ENCODE measurements at regions of chr2 and their contacts with region 1.

Region 1: GRCh38 chr2:60674524-60675165 is 81.4 kb upstream of the PAPOLG start:
- DNase-seq: peak; percentile 65
- ATAC-seq: peak; percentile 100
- H3K4me3 ChIP-seq: no peak overlapping the region
- H3K27ac ChIP-seq: no peak overlapping the region
- H3K4me1 ChIP-seq: no peaks in the 10 kb centered on the region; a peak in 1 of 4 replicates
- H3K27me3 ChIP-seq: no peaks in the 10 kb centered on the region
- CTCF ChIP-seq: peak; percentile 71 to 96 (median 94)
- POLR2A ChIP-seq: no peak
- RAD21 ChIP-seq: peak; percentile 77

Region 2: DNA sequence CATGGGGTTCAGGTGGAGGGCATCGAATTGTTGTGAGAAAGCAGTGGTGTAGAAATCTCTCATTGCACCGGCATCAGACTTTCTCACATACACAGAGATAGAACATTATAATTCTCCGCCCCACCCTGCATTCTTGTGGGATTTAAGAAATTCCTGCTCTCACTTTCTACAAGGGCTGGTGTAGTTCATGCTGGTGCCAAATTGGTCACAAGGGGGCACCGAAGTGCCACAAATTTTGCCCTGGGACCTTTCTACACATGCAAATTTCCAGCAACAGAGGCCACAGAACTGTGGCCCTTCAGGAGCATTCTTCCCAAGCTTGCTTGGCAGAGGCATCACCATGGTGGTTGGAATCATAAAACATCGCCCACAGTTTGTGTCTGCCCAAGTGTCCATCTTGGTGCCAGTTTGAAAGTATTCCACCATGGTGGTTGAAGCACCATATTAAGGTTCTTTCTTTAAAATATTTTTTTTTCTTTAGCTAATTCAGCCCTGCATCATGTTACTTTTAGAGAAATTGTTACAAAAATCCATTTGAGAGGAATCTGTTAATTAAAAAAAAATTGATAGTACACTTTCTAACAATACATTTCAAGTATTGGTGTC is 1912.4 kb before region 1 on chr2:
- CTCF ChIA-PET with region 1: no interaction called
- POLR2A ChIA-PET with region 1: no interaction called
- RAD21 ChIA-PET with region 1: no interaction called
- intact Hi-C with region 1: loop called (anchors 10 kb)
- DNase-seq: peak; percentile 41
- ATAC-seq: peak; percentile 97
- H3K4me3 ChIP-seq: no peak overlapping the region
- H3K27ac ChIP-seq: no peak overlapping the region
- H3K4me1 ChIP-seq: no peaks in the 10 kb centered on the region
- H3K27me3 ChIP-seq: peaks cover 32% of the 10 kb centered on the region
- CTCF ChIP-seq: peak; percentile 44 to 78 (median 74); a peak in 5 of 6 replicates
- POLR2A ChIP-seq: no peak
- RAD21 ChIP-seq: peak; percentile 75

Region 3: GRCh38 chr2:60560734-60561644 is 113.7 kb before region 1 on chr2:
- CTCF ChIA-PET with region 1: interaction called, 33 read pairs
- POLR2A ChIA-PET with region 1: interaction called, 3 read pairs
- RAD21 ChIA-PET with region 1: no interaction called
- intact Hi-C with region 1: loop called (anchors 1 kb)
- DNase-seq: no peak
- ATAC-seq: peak; percentile 84
- H3K4me3 ChIP-seq: no peak overlapping the region
- H3K27ac ChIP-seq: no peak overlapping the region
- H3K4me1 ChIP-seq: no peaks in the 10 kb centered on the region
- H3K27me3 ChIP-seq: peaks cover 75% of the 10 kb centered on the region
- CTCF ChIP-seq: peak; percentile 38 to 69 (median 50); a peak in 5 of 6 replicates
- POLR2A ChIP-seq: no peak
- RAD21 ChIP-seq: peak; percentile 37; the same call in 1 of the 2 replicates

Region 4: DNA sequence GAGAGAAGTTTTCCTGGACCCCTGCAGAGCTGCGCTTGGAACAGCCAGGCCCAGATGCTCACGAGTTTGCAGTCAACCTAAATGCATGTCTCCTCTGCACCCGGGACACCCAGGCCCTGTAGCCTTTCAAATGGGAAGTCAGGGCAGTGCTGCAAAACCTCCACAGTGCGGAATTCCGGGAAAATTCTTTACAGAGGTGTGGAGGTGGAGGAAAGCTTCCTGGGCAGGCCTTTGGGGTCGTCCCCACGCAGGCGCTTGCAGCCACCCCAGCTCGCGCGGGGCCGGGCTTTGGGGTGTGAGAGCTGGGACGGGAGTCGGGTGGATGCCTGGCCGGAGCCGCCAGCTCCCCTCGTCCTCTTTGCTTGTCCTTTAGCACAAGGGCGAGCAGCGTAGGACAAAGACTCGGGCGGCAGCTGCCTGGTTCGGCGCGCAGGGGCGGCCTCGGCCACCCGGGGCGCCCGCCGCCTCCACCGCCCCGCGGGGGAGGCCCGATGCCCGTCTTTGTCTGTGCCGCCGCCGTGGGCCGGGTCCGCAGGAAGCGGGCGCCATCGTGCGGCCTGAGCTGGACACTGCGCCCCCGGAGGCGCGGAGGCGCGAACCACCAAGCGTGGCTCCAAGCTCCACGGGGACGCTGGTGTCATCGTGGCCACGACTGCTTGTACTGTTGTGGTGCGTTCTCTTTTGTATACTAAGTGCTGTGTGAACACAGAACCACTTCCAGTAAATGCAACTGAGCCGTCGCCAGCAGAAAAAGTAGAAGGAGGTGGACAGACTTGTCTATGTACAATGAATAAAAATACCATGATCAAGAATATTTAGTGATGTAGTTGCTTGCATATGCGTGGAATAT is 93.0 kb before region 1 on chr2:
- CTCF ChIA-PET with region 1: interaction called, 12 read pairs
- POLR2A ChIA-PET with region 1: no interaction called
- RAD21 ChIA-PET with region 1: no interaction called
- intact Hi-C with region 1: no loop called
- DNase-seq: no peak
- ATAC-seq: peak; percentile 93
- H3K4me3 ChIP-seq: peak overlapping the region; percentile 26 to 43
- H3K27ac ChIP-seq: no peak overlapping the region
- H3K4me1 ChIP-seq: peaks cover 0 to 14% of the 10 kb centered on the region in 2 experiments; a peak in 2 of 4 replicates
- H3K27me3 ChIP-seq: peaks cover 5% of the 10 kb centered on the region; the same call in 1 of the 2 replicates
- CTCF ChIP-seq: peak; percentile 56 to 89 (median 87); a peak in 5 of 6 replicates
- POLR2A ChIP-seq: no peak
- RAD21 ChIP-seq: peak; percentile 85

Region 5: GRCh38 chr2:60659026-60659425 is 15.6 kb before region 1 on chr2:
- CTCF ChIA-PET with region 1: interaction called, 11 read pairs
- POLR2A ChIA-PET with region 1: no interaction called
- RAD21 ChIA-PET with region 1: interaction called in 1 of 2 experiments, 3 read pairs
- intact Hi-C with region 1: no loop called
- DNase-seq: no peak
- ATAC-seq: peak; percentile 82
- H3K4me3 ChIP-seq: no peak overlapping the region
- H3K27ac ChIP-seq: no peak overlapping the region
- H3K4me1 ChIP-seq: no peaks in the 10 kb centered on the region
- H3K27me3 ChIP-seq: peaks cover 6% of the 10 kb centered on the region; the same call in 1 of the 2 replicates
- CTCF ChIP-seq: peak in 2 of 3 experiments; percentile 25 to 36; a peak in 1 of 6 replicates
- POLR2A ChIP-seq: no peak
- RAD21 ChIP-seq: no peak

Region 6: DNA sequence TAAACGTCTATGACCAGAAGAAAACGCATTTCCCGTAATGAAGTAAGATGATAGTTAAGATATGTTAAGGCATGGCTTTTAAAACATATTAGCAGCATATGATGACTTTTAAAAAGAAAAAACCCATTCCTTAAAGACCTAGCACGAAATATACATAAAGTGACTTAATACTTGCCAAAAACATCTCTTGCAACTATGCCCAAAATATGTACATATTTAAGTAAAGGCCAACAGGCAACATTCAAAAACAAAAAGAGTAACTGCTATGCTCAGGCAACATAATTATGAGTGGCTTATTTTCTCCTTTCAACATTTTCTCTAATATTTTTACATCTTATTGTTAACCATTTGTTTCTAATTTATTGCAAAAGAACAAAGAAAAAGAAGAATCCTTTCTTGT is 21.1 kb after region 1 on chr2:
- CTCF ChIA-PET with region 1: interaction called, 10 read pairs
- POLR2A ChIA-PET with region 1: no interaction called
- RAD21 ChIA-PET with region 1: no interaction called
- intact Hi-C with region 1: no loop called
- DNase-seq: no peak
- ATAC-seq: no peak
- H3K4me3 ChIP-seq: no peak overlapping the region
- H3K27ac ChIP-seq: no peak overlapping the region
- H3K4me1 ChIP-seq: no peaks in the 10 kb centered on the region
- H3K27me3 ChIP-seq: no peaks in the 10 kb centered on the region
- CTCF ChIP-seq: no peak
- POLR2A ChIP-seq: no peak
- RAD21 ChIP-seq: no peak